ENCODE measurements at regions of chr9 and their contacts with region 1.

Region 1: DNA sequence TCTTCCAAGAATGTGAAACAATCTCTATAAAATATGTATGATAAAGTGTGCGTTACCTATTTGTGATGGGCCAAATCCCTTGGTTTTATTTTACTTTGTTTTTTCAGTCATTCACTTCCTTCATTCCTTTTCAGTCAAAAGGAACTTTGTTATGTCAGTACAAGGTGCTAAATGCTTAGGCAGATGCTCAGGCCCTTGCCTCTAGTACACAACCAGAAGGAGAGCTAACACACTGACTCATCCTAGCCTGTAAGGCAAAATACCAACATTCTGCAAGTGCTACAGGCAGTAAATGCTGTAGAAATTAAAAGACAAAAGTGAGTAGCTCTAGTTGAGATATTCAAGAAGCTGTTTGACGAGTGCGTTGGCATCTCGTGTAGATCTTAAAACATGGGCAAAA is 49.4 kb downstream of the TRPM6 start:
- DNase-seq: no peak
- H3K4me3 ChIP-seq: no peak overlapping the region
- CTCF ChIP-seq: no peak

Region 2: GRCh38 chr9:74875656-74876413 is 37.5 kb after region 1 on chr9:
- in situ Hi-C with region 1: no loop called
- DNase-seq: no peak
- H3K4me3 ChIP-seq: no peak overlapping the region
- CTCF ChIP-seq: no peak

Region 3: DNA sequence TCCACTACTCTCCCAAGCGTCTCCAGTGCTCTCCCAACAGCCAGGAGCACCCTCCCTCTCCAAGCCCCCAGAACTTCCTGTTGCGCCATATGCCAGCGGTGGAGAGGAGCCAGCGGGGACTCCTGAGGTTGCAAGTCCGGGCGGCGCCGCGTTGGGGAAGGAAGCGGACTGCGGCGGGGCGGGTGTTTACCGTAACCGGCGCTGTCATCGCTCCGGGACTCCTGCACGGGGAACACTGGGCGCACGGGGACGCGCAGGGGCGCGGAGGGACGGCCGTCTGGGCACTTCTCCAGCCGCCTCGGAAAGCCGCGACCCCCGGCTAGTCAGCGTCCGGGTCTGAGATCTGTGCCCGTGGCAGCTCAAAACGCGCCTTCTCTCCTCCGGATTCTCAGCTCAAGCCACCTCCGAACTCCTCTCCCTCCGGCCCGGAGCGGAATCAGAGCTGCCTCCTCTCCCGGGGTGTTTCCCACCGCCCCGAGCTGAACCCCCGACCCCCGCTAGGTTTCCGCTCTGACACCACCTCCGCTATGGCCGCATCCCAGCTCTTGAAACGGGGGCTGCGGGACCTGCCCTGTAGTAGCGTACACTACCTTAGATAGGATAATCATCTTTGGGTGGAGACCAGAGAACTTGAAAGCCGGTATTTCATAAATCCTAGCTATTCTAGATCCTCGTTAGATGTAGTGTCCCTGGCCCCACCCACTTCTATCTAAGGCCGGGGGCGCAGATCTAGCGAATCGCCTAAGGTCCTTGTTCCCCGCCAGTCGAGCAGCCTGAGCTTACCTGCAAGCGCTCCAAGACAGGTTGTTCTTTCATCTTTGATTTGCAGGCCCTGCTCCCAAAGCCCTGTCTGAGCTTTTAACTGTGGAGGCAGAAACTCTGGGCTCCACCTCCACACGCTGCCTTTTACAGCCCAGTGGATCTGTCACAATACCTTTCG is 49.0 kb after region 1 on chr9 and contains the start of gene TRPM6:
- in situ Hi-C with region 1: loop called (anchors 5 kb)
- DNase-seq: peak; percentile 36
- H3K4me3 ChIP-seq: peak within 1 kb of the TSS; percentile 70
- CTCF ChIP-seq: no peak

Measured in astrocyte of the cerebellum (primary cell).